WTC11 (cell line): ENCODE measurements at regions of chr22 and their contacts with region 1.

Region 1: GRCh38 chr22:37594237-37594636 is 14.3 kb upstream of the LGALS2 start:
- DNase-seq: no peak
- ATAC-seq: no peak
- H3K4me3 Mint-ChIP-seq: no peak overlapping the region
- H3K27ac Mint-ChIP-seq: no peak overlapping the region
- H3K4me1 Mint-ChIP-seq: peaks cover 2% of the 10 kb centered on the region; the same call in 1 of the 2 replicates
- H3K27me3 Mint-ChIP-seq: peaks cover 2% of the 10 kb centered on the region; the same call in 1 of the 2 replicates
- CTCF ChIP-seq: no peak

Region 2: DNA sequence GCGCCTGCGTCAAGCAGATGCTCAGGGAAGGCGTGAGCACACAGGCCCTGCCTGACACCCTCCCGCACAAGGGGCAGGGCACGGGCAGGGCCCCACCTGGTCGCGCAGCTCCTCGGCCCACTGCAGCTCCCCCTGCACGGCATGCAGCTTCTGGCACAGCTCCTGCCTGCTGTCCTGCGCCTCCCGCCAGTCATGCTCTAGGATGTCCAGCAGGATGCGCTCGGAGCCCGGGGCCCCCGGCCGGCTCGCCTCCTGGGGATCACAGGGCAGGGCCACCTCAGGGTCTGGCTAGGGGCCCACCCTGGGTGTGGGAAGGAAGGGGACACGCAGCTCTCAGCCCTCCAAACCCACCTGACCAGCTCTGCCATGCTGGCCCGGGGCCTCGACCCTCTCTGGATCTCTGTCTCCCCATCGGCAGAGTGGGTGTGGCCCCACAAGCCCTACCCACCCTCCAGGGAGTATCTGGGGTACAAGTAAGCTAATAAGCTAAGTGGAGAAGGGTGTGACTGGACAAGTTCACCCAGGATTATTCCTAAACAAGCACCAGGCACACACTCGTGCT is 85.7 kb before region 1 on chr22:
- CTCF ChIA-PET with region 1: interaction called, 17 read pairs
- POLR2A ChIA-PET with region 1: no interaction called
- DNase-seq: no peak
- ATAC-seq: peak; percentile 35
- H3K4me3 Mint-ChIP-seq: no peak overlapping the region
- H3K27ac Mint-ChIP-seq: no peak overlapping the region
- H3K4me1 Mint-ChIP-seq: peaks cover 8% of the 10 kb centered on the region
- H3K27me3 Mint-ChIP-seq: no peaks in the 10 kb centered on the region
- CTCF ChIP-seq: no peak

Region 3: DNA sequence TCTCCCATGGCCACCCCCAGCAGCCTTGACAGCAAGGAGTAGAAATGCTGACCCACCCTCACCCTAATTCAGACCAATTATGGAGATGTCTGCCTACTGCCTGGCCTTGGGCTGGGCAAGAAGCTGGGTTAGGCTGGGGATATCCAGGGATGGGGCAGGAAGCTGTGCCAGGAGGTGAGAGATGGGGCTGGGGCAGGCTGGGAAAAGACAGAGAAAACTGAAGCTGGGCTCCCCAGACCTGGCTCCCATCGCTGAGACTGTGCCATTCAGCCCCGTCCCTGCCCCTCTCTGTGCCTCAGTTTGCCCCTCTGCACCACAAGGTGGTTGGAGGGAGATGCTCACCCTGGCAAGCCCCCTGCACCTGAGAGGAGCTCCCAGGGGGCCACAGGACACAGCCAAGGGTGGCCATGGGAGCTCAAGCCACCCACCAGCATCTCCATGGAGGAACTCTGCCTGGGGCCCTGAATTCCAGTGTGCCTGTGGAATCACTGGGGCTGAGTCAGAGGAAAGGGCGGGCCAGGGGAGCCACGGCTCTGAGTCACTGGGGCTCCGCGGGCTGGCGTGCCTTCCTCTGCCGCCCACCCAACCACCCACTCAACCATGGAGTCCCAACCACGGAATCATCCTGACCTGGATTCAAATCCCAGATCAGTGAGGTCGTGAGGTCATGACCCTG is 69.0 kb before region 1 on chr22:
- CTCF ChIA-PET with region 1: interaction called, 15 read pairs
- POLR2A ChIA-PET with region 1: no interaction called
- DNase-seq: no peak
- ATAC-seq: no peak
- H3K4me3 Mint-ChIP-seq: no peak overlapping the region
- H3K27ac Mint-ChIP-seq: no peak overlapping the region
- H3K4me1 Mint-ChIP-seq: peaks cover 5% of the 10 kb centered on the region; the same call in 1 of the 2 replicates
- H3K27me3 Mint-ChIP-seq: peaks cover 17% of the 10 kb centered on the region
- CTCF ChIP-seq: no peak

Region 4: GRCh38 chr22:37544955-37545699 is 49.1 kb before region 1 on chr22:
- CTCF ChIA-PET with region 1: interaction called, 86 read pairs
- POLR2A ChIA-PET with region 1: interaction called, 11 read pairs
- DNase-seq: peak; percentile 92
- ATAC-seq: peak; percentile 74
- H3K4me3 Mint-ChIP-seq: peak overlapping the region; percentile 53
- H3K27ac Mint-ChIP-seq: peak overlapping the region; percentile 74; the same call in 1 of the 2 replicates
- H3K4me1 Mint-ChIP-seq: peaks cover 29% of the 10 kb centered on the region
- H3K27me3 Mint-ChIP-seq: no peaks in the 10 kb centered on the region; the same call in 1 of the 2 replicates
- CTCF ChIP-seq: peak; percentile 53; the same call in 1 of the 2 replicates

Region 5: DNA sequence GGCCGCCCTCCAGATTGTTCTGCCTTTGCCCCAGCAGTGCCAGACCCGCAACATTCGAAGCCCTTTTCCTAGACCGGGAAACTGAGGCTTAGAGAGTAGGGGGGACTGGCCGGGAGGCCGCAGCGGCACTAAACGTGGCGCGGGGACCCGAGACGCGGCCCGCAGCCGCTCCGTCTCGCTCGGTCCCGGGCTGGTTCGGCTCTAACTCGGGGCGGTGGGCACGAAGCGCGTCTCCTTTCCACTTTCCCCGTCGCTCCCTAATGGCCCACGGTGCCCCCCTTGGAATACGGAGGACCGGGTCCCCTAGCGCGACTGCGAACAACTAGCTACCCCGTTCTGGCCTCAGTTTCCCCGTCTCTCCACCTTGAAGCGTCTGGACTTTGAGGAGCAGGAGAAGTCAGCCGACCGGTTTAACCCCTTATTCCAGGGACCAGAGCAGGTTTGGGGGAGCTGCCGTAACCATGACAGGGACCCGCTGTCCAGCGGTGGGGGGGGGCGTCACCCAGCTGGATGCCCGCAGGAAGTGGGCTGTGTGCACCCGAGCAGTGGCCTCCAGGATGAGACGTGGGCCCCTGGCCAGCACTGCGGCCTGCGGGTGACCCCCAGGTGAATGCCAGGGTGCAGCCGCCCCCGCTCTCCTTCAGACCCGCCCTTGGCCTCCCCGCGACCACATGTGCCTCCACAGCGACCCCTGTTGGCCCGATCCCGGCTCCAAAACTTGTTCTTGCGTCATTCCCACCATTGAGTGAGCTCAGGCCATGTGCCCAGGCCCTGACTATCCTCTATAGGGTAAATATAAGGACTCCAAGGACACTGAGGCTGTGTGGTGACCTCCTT is 32.8 kb before region 1 on chr22:
- CTCF ChIA-PET with region 1: interaction called, 146 read pairs
- POLR2A ChIA-PET with region 1: no interaction called
- DNase-seq: peak; percentile 95
- ATAC-seq: peak; percentile 53
- H3K4me3 Mint-ChIP-seq: peak overlapping the region; percentile 73
- H3K27ac Mint-ChIP-seq: no peak overlapping the region
- H3K4me1 Mint-ChIP-seq: peaks cover 48% of the 10 kb centered on the region
- H3K27me3 Mint-ChIP-seq: peaks cover 52% of the 10 kb centered on the region
- CTCF ChIP-seq: peak; percentile 75

Region 6: GRCh38 chr22:37575490-37576003 is 18.7 kb before region 1 on chr22:
- CTCF ChIA-PET with region 1: interaction called, 146 read pairs
- POLR2A ChIA-PET with region 1: interaction called, 3 read pairs
- DNase-seq: no peak
- ATAC-seq: no peak
- H3K4me3 Mint-ChIP-seq: no peak overlapping the region
- H3K27ac Mint-ChIP-seq: no peak overlapping the region
- H3K4me1 Mint-ChIP-seq: peaks cover 4% of the 10 kb centered on the region
- H3K27me3 Mint-ChIP-seq: peaks cover 8% of the 10 kb centered on the region
- CTCF ChIP-seq: no peak

Region 7: GRCh38 chr22:37643225-37643847 is 49.1 kb after region 1 on chr22:
- CTCF ChIA-PET with region 1: interaction called, 12 read pairs
- POLR2A ChIA-PET with region 1: no interaction called
- DNase-seq: peak; percentile 93
- ATAC-seq: peak; percentile 77
- H3K4me3 Mint-ChIP-seq: no peak overlapping the region
- H3K27ac Mint-ChIP-seq: peak overlapping the region; percentile 85
- H3K4me1 Mint-ChIP-seq: peaks cover 13% of the 10 kb centered on the region
- H3K27me3 Mint-ChIP-seq: no peaks in the 10 kb centered on the region
- CTCF ChIP-seq: peak; percentile 86

Region 8: DNA sequence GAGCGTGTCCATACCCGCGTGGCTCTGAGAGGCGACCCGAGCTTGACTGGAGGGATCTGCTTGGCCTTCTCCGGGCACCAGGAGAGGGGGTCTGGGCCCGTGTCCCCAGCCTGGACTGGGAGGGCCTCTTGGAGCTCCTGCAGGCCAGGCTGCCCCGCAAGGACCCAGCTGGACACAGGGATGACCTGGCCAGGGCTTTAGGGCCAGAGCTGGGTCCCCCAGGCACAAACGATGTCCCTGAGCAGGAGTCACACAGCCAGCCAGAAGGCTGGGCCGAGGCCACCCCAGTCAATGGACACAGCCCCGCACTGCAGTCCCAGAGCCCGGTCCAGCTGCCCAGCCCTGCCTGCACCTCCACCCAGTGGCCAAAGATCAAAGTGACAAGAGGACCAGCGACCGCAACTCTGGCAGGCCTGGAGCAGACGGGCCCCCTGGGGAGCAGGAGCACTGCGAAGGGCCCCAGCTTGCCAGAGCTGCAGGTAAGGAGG is 140.8 kb after region 1 on chr22:
- CTCF ChIA-PET with region 1: no interaction called
- POLR2A ChIA-PET with region 1: no interaction called
- DNase-seq: peak; percentile 73
- ATAC-seq: peak; percentile 65
- H3K4me3 Mint-ChIP-seq: no peak overlapping the region
- H3K27ac Mint-ChIP-seq: no peak overlapping the region
- H3K4me1 Mint-ChIP-seq: no peaks in the 10 kb centered on the region
- H3K27me3 Mint-ChIP-seq: peaks cover 84% of the 10 kb centered on the region
- CTCF ChIP-seq: no peak